K562 (cell line): ENCODE measurements at regions of chr11 and their contacts with region 1.

Region 1: DNA sequence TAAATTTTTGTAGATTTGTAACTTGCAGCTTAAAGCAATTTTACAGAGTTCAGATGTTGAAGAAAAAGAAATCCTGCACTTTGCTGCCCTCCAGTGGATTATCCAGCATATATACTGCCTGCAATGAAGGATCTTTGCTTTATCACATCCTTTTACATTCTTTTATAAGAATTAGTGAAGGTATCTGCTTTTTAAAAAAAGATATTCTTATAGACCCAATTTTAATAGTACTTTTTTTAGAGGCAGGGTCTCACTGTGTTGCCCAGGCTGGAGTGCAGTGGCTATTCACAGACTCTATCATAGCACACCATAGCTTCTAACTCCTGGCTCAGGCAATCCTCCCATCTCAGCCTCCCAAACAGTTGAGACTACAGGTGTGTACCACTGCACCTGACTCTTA is 60.7 kb downstream of the TTC17 start:
- DNase-seq: peak; percentile 15 to 53 (median 20)
- ATAC-seq: peak; percentile 85
- H3K4me3 ChIP-seq: no peak overlapping the region
- H3K27ac ChIP-seq: no peak overlapping the region
- H3K4me1 ChIP-seq: no peaks in the 10 kb centered on the region
- H3K27me3 ChIP-seq: no peaks in the 10 kb centered on the region
- CTCF ChIP-seq: peak; percentile 26 to 70 (median 53); a peak in 5 of 6 replicates
- EP300 ChIP-seq: no peak
- POLR2A ChIP-seq: no peak
- RAD21 ChIP-seq: peak; percentile 71 to 75

Region 2: GRCh38 chr11:43053638-43054412 is 365.6 kb before region 1 on chr11:
- CTCF ChIA-PET with region 1: no interaction called
- POLR2A ChIA-PET with region 1: no interaction called
- in situ Hi-C with region 1: no loop called
- intact Hi-C with region 1: loop called (anchors 10 kb)
- DNase-seq: no peak
- ATAC-seq: no peak
- H3K4me3 ChIP-seq: no peak overlapping the region
- H3K27ac ChIP-seq: no peak overlapping the region
- H3K4me1 ChIP-seq: no peaks in the 10 kb centered on the region
- H3K27me3 ChIP-seq: no peaks in the 10 kb centered on the region
- CTCF ChIP-seq: no peak
- EP300 ChIP-seq: no peak
- POLR2A ChIP-seq: no peak
- RAD21 ChIP-seq: no peak

Region 3: DNA sequence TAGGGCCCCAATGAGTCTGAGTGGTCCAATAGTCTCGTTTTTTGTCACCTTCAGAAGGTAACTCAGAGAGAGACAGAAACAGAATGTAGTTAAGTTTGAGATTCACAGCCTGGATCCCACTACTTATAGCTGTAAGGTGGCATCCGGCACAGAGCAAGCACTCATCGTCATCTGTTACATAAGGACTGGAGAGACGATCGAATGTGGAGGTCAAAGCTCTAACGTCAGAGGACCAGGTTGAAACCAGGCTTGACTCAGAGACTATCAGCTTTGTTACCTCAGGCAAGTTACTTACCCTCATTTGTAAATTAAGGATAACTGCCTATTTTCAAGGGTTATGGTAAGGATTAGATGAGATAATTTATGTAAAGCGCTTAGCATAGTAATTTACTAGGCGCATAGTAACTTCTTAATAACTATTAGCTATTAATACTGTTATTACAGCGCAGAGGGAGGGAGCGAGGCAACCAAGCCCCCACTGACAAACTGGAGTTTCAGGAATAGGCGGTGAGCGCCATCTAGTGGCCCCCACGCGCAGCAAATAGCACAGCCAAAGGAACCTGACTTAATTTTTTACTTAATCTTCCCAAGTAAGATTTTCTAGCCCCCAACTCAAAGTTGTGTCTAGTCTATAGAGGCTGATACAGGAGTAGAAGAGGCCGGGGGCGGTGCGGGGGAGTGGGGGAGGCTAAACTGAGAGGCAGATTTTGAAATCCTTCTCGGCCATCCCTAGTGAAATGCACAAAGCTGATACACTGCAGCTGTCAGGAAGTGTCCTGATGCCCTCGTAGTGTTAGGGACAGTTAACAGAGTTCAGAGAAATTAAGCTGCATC is 136.6 kb before region 1 on chr11:
- CTCF ChIA-PET with region 1: no interaction called
- POLR2A ChIA-PET with region 1: no interaction called
- in situ Hi-C with region 1: no loop called
- intact Hi-C with region 1: loop called (anchors 1 kb)
- DNase-seq: peak; percentile 60 to 75 (median 66)
- ATAC-seq: peak; percentile 90
- H3K4me3 ChIP-seq: no peak overlapping the region; the same call in 1 of the 2 replicates
- H3K27ac ChIP-seq: no peak overlapping the region
- H3K4me1 ChIP-seq: no peaks in the 10 kb centered on the region; a peak in 1 of 5 replicates
- H3K27me3 ChIP-seq: peaks cover 0 to 4% of the 10 kb centered on the region in 2 experiments; a peak in 1 of 5 replicates
- CTCF ChIP-seq: peak; percentile 71 to 91 (median 89)
- EP300 ChIP-seq: no peak
- POLR2A ChIP-seq: no peak
- RAD21 ChIP-seq: peak; percentile 57 to 74

Region 4: DNA sequence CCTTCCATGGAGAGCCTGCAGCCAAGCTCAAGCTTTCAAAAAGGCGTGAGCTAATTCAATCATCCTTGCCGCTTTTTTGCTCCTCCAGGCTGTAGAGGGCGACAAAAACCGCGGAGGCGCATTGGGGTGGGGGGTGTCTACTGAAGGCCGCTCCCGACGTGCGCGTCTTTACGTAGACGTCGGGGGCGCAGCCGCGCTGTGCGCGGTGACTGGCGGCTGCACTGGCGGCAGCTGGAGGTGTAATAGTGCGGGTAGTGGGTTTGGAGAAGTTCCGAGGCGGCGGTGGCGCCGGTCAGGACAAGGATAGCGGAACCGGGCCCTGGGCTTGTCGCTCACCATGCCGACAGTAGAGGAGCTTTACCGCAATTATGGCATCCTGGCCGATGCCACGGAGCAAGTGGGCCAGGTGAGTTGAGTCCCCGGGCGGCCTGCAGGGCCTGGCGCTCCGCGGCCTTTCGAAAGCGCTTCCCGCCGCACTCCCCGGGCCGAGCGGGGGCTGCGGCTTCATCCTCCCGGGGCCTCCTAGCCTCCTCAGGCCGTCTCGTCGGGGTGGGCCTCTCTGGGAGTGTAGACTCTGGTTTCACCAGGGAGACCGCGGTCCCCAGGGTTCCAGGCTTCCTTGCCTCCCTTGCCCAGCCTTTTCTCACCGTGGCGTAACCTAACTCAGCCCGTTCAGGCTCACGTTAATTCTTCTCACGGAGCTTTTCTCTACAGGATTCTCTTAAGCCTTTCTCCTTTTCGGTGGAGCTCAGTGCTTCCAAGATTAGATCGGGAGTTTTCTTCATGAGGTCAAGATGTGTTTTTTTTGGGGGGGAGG is 107.5 kb before region 1 on chr11 and contains the start of gene API5:
- CTCF ChIA-PET with region 1: interaction called, 4 read pairs
- POLR2A ChIA-PET with region 1: no interaction called
- in situ Hi-C with region 1: no loop called
- intact Hi-C with region 1: loop called (anchors 5 kb)
- DNase-seq: peak; percentile 79 to 97 (median 84)
- ATAC-seq: peak; percentile 97
- H3K4me3 ChIP-seq: peak within 1 kb of the TSS; percentile 60
- H3K27ac ChIP-seq: peak within 1 kb of the TSS; percentile 74
- H3K4me1 ChIP-seq: peaks cover 4 to 6% of the 10 kb centered on the region in 2 experiments; a peak in 4 of 5 replicates
- H3K27me3 ChIP-seq: no peaks in the 10 kb centered on the region
- CTCF ChIP-seq: peak; percentile 85 to 94 (median 85)
- EP300 ChIP-seq: peak; percentile 43; the same call in 1 of the 2 replicates
- POLR2A ChIP-seq: peak; percentile 92
- RAD21 ChIP-seq: peak; percentile 39 to 49
- polyA plus RNA-seq, gene API5: 59.8 to 111 TPM

Region 5: DNA sequence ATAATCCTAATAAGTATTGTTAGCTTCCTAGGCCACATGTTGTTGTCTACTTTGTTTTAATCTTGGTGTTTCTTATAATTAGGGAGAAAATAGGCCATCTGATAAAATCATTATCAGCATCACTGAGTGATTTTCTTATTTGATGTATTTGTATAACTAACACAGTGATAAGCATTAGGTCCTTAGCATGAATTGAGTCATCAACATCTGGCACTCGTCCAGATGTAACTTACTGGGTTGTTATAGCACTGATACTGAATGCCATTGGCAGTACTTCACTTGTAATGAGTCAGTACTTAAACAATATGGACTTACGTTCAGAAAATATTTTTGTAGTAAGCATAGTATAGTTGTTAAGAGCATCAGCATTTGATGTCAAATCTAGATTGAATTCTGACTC is 91.5 kb before region 1 on chr11:
- CTCF ChIA-PET with region 1: no interaction called
- POLR2A ChIA-PET with region 1: no interaction called
- in situ Hi-C with region 1: no loop called
- intact Hi-C with region 1: loop called (anchors 5 kb)
- DNase-seq: peak; percentile 11 to 61 (median 44)
- ATAC-seq: no peak
- H3K4me3 ChIP-seq: no peak overlapping the region
- H3K27ac ChIP-seq: no peak overlapping the region
- H3K4me1 ChIP-seq: no peaks in the 10 kb centered on the region
- H3K27me3 ChIP-seq: no peaks in the 10 kb centered on the region
- CTCF ChIP-seq: no peak
- EP300 ChIP-seq: no peak
- POLR2A ChIP-seq: no peak
- RAD21 ChIP-seq: no peak

Region 6: GRCh38 chr11:43518408-43519160 is 99.1 kb after region 1 on chr11:
- CTCF ChIA-PET with region 1: no interaction called
- POLR2A ChIA-PET with region 1: no interaction called
- in situ Hi-C with region 1: no loop called
- intact Hi-C with region 1: no loop called
- DNase-seq: no peak
- ATAC-seq: no peak
- H3K4me3 ChIP-seq: no peak overlapping the region
- H3K27ac ChIP-seq: no peak overlapping the region
- H3K4me1 ChIP-seq: no peaks in the 10 kb centered on the region
- H3K27me3 ChIP-seq: peaks cover 9 to 56% of the 10 kb centered on the region in 2 experiments; a peak in 3 of 5 replicates
- CTCF ChIP-seq: no peak
- EP300 ChIP-seq: no peak
- POLR2A ChIP-seq: no peak
- RAD21 ChIP-seq: no peak